Aorta (tissue), 5 donors: ENCODE measurements at regions of chr2 and their contacts with region 1.

Region 1: DNA sequence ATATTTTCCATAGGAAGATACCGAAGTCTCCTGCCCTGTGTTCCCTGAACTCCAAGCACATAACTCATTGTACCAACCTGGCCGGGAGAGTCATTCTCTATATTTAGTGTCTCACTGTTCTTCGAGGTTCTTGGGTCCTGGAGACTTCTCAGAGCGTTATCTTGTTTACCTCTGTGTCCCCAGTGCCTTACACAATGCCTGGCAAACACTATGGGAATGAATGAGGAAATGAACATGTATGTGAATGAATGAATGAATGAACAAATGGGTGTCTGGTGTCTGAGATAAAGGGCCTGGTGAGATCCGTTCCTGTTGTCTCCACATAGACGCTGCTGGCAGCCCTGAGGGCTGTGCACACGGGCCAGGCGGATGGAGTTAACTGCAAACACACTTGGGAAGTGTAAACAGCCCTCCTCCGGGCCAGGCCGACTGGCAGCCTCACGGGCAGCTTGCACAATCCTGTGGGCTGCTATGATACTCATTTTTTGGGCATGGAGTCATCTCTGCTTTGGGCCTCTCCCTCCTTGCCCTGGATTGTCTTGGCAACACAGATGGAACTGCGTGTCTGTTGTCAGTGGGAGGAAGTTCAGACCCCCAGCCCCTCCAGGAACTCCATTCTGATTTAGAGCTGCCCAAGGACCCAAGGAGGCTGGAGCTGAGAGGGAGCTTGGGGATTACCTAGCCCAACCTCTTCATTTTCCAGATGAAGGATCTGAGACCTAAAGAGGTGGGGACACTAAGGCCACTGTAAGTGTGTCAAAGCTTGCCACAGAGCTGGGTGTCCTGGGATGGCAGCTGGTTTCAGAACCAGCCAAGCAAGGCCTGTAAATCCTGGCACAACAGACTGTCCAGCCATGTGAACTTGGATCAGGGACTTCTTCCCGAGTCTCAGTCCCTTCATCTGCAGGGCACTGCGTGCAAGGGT is 124.4 kb downstream of the INHBB start:
- DNase-seq: peak; percentile 90 to 91
- ATAC-seq: peak; percentile 92
- H3K4me3 ChIP-seq: no peak overlapping the region
- H3K27ac ChIP-seq: peak overlapping the region; percentile 49 to 98
- H3K4me1 ChIP-seq: peaks cover 0 to 5% of the 10 kb centered on the region in 2 donors
- H3K27me3 ChIP-seq: no peaks in the 10 kb centered on the region

Region 2: DNA sequence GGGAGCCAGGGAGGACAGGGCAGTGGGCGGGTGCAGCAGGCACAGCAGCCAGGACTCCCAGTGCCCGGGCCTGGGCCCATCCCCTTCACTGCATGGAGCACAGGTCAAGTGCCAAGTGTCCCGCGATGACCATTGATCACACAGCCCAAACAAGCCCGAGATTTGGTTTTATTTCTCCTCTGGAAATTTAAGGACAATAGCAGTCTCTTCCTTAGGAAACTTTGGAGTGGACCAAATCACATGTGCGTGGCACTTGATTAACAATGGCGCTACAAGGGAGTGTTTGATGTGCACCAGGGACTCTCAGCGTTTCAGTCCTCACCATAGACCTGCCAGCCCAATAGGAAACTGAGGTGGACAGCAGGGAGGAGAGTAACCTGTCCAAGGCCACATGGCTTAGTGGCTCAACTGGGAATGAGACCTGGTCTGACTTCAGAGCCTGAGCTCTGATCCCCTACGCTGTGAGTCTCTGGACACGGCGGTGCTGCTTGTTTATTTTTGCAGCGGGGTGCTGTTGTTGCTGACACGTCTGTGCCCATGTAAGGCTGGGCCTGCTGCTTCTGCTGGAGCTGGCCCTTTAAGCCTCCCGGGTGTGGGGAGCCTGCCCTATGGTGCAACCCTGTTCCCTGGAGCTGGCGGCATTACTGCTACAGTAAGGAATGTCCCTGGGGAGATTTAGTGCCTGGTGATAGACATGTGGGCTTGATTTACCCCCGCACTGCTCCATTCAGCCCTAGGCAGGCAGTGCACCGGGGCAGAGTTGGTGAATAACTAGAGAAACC is 69.8 kb after region 1 on chr2:
- intact Hi-C with region 1: loop called (anchors 5 kb)
- DNase-seq: peak; percentile 89 to 91
- ATAC-seq: peak; percentile 91
- H3K4me3 ChIP-seq: no peak overlapping the region
- H3K27ac ChIP-seq: peak overlapping the region in 1 of 2 donors; percentile 55
- H3K4me1 ChIP-seq: no peaks in the 10 kb centered on the region
- H3K27me3 ChIP-seq: no peaks in the 10 kb centered on the region

Region 3: DNA sequence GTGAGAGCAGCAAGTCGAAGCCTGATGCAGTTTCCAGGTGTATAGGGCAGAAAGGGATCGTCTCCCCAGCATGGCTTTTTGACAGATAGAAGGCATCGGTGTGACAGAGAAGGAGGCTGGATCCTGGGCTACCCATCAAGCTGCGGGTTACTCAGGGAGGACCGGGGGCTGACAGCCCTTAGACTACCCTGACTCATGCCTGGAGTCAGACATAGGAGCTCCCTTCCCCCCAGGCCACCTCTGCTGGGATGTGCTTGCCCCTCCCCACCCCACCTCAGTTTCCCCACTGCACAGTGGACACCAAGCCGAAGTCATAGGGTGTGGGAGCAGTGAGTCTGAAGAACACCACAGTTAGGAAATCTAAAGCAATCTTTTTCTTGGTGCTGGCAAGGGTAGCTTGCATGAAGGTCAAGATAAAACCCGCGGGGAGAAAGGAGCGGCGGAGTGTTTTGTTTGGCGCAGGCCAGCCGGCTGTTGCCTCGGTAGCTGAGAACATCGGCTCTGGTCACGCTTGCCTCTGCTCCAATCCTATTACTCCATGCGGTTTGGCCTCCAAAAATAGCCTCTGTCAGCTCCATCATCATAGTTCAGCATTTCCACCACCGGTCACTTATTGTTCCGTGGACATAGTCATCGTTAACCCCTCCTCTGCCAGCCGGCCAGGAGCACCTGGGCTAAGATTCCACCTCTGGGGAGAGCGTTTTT is 96.2 kb after region 1 on chr2:
- intact Hi-C with region 1: loop called in 1 of 2 experiments (anchors 5 kb)
- DNase-seq: peak; percentile 92 to 94
- ATAC-seq: peak; percentile 90
- H3K4me3 ChIP-seq: no peak overlapping the region
- H3K27ac ChIP-seq: no peak overlapping the region
- H3K4me1 ChIP-seq: no peaks in the 10 kb centered on the region
- H3K27me3 ChIP-seq: no peaks in the 10 kb centered on the region